HepG2 (cell line): ENCODE measurements at regions of chr3 and their contacts with region 1.

Region 1: GRCh38 chr3:43442872-43443395 is 156.6 kb downstream of the SNRK start:
- DNase-seq: no peak
- ATAC-seq: no peak
- H3K4me3 ChIP-seq: no peak overlapping the region
- H3K27ac ChIP-seq: no peak overlapping the region
- H3K4me1 ChIP-seq: no peaks in the 10 kb centered on the region
- H3K27me3 ChIP-seq: no peaks in the 10 kb centered on the region
- CTCF ChIP-seq: no peak
- EP300 ChIP-seq: no peak
- POLR2A ChIP-seq: no peak
- RAD21 ChIP-seq: no peak

Region 2: GRCh38 chr3:43455233-43455632 is 12.3 kb after region 1 on chr3:
- CTCF ChIA-PET with region 1: no interaction called
- POLR2A ChIA-PET with region 1: no interaction called
- in situ Hi-C with region 1: no loop called
- intact Hi-C with region 1: loop called (anchors 1 kb)
- DNase-seq: peak; percentile 52
- ATAC-seq: peak; percentile 59; the same call in 2 of the 3 replicates
- H3K4me3 ChIP-seq: no peak overlapping the region
- H3K27ac ChIP-seq: no peak overlapping the region
- H3K4me1 ChIP-seq: 0 out of 2 replicates have a peak, but pooled peaks cover 8% of the 10 kb centered on the region
- H3K27me3 ChIP-seq: no peaks in the 10 kb centered on the region
- CTCF ChIP-seq: no peak
- EP300 ChIP-seq: peak in 1 of 2 experiments; percentile 61; a peak in 1 of 4 replicates
- POLR2A ChIP-seq: no peak
- RAD21 ChIP-seq: no peak